ENCODE measurements at regions of chr11 and their contacts with region 1.

Region 1: GRCh38 chr11:72814286-72815109 is at the start of gene ATG16L2:
- DNase-seq: peak; percentile 74 to 86 (median 80)
- H3K4me3 ChIP-seq: peak within 1 kb of the TSS; percentile 73 to 100 (median 99)
- H3K4me3 Mint-ChIP-seq: peak within 1 kb of the TSS; percentile 99 to 100
- H3K27ac ChIP-seq: peak within 1 kb of the TSS; percentile 98
- H3K27ac Mint-ChIP-seq: peak within 1 kb of the TSS; percentile 98 to 100 (median 99)
- H3K4me1 ChIP-seq: peaks cover 46 to 70% of the 10 kb centered on the region in 2 donors
- H3K4me1 Mint-ChIP-seq: peaks cover 65% of the 10 kb centered on the region
- H3K27me3 ChIP-seq: no peaks in the 10 kb centered on the region
- H3K27me3 Mint-ChIP-seq: peaks cover 0 to 5% (median 3%) of the 10 kb centered on the region in 3 donors
- CTCF ChIP-seq: no peak
- polyA plus RNA-seq, gene ATG16L2: 36.9 to 975 (median 46.8) TPM

Region 2: DNA sequence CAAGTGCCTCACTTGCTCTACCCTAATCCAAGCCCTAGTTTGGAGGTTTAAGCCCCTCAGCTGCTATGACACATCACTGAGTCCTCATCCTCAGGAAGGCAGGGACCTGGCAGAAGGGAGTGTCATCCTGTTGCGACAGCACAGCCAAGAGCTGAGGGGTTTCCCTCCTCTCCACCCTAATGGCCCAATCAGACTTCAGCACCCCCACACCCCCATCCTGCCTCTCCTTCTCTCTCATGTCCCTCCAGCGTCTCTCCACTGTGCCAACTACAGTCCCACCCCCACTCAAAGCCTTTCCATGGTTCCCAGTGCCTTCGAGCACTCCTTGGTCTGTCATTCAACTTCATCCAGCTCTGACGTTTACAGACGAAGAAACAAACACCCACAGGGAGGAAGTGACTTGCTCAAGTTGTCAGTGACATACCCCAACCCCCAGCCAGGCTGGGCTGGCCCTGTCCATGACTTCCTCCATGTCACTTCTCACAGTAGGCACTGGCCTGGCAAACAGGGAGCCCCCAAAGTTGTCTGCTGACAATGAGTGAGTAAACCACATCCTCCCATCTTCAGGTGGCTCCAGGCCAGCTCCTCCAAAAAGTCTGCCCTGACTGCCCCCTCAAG is 77.9 kb before region 1 on chr11:
- intact Hi-C with region 1: loop called (anchors 2 to 5 kb)
- DNase-seq: peak; percentile 97 to 99 (median 98)
- H3K4me3 ChIP-seq: peak overlapping the region; percentile 33 to 88 (median 83)
- H3K4me3 Mint-ChIP-seq: peak overlapping the region; percentile 97 to 99
- H3K27ac ChIP-seq: peak overlapping the region; percentile 98 to 99
- H3K27ac Mint-ChIP-seq: peak overlapping the region; percentile 100
- H3K4me1 ChIP-seq: peaks cover 93 to 94% of the 10 kb centered on the region in 2 donors
- H3K4me1 Mint-ChIP-seq: peaks cover 87% of the 10 kb centered on the region
- H3K27me3 ChIP-seq: no peaks in the 10 kb centered on the region
- H3K27me3 Mint-ChIP-seq: peaks cover 0 to 4% (median 2%) of the 10 kb centered on the region in 3 donors
- CTCF ChIP-seq: no peak

Region 3: DNA sequence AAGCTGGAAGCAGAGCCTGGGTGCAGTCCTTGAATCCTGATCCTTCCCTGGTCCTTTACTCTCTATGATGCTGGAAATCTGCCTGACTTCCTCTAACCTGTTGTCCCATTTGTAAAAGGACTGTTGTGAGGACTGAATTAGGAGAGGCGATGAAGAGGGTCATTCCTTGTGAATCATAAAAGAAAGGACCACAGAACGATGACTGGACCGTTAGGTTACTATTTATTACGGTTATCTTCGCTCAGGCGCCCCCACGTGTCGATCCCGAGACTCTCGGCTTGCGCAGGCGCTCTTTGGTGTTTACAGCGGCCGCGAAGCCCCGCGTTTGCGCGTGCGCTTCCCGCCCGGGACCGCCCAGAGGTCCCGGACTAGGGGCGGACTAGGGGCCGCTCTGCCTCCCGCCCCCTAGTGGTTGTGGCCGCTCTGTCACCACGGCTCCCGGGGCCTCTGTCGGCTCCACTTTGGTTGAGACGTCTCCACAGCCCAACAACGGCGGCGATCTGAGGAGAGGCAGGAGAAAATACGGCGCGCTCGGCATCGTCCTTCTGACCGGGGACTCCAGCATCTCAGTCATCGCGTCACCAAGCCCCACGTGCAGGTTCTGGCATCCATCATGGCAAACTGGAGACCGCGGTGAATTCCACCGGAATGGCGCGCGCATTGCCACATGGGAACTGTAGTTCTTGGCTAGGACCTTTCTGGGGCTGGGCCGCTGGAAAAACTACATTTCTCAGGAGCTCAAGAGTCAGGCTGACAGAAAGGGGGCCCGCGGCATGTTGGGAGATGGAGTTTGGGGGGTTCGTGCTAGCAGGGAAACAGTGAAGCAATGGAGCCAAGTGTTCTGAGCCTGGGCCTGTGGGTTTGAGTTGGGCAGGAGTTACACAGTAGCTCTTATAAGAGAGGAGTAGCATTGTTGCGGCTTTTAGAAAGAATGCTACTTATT is 20.8 kb before region 1 on chr11 and contains the start of gene STARD10:
- intact Hi-C with region 1: loop called in 1 of 2 experiments (anchors 2 kb)
- DNase-seq: peak; percentile 95 to 97 (median 96)
- H3K4me3 ChIP-seq: peak within 1 kb of the TSS; percentile 46 to 90 (median 65)
- H3K4me3 Mint-ChIP-seq: peak within 1 kb of the TSS; percentile 96 to 99
- H3K27ac ChIP-seq: peak within 1 kb of the TSS; percentile 85 to 96
- H3K27ac Mint-ChIP-seq: peak within 1 kb of the TSS; percentile 96 to 100 (median 99)
- H3K4me1 ChIP-seq: peaks cover 50 to 63% of the 10 kb centered on the region in 2 donors
- H3K4me1 Mint-ChIP-seq: peaks cover 53% of the 10 kb centered on the region
- H3K27me3 ChIP-seq: no peaks in the 10 kb centered on the region
- H3K27me3 Mint-ChIP-seq: peaks cover 0 to 3% (median 2%) of the 10 kb centered on the region in 3 donors
- CTCF ChIP-seq: peak; percentile 99
- polyA plus RNA-seq, gene STARD10: 13.6 to 18.7 (median 15.4) TPM

Measured in CD14-positive monocyte (primary cell).